GM10248 (cell line): ENCODE measurements at regions of chr14 and their contacts with region 1.

Region 1: GRCh38 chr14:102694530-102695166 is 82.6 kb upstream of the TRAF3 start:
- DNase-seq: peak; percentile 62
- CTCF ChIP-seq: peak; percentile 77

Region 2: GRCh38 chr14:101781240-101782061 is 913.2 kb before region 1 on chr14:
- CTCF ChIA-PET with region 1: no interaction called
- POLR2A ChIA-PET with region 1: no interaction called
- DNase-seq: peak; percentile 45
- CTCF ChIP-seq: no peak

Region 3: GRCh38 chr14:102708494-102708893 is 13.8 kb after region 1 on chr14:
- CTCF ChIA-PET with region 1: interaction called, 37 read pairs
- POLR2A ChIA-PET with region 1: no interaction called
- DNase-seq: peak; percentile 70
- CTCF ChIP-seq: no peak

Region 4: DNA sequence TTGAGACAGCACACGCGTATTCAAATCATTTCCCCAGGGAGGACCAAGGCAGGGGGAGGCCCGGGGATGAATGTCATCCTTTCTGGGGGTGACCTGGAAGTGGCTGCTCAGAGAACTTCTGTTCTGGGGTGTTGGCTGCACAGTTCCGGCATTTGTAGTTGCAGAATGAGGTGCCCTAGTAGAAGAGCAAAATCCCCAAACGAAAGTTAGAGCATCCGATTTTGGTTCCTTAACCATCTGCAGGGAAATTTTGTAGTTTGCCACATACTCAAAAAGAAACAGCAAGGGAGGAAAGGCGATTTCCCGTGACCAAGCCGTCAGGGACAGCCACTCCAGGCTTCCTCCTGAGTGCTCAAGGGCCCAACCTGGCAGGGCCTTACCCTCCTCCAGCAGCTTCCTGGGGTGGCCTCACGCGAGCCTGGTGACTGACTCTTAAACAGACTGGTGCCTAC is 69.6 kb after region 1 on chr14:
- CTCF ChIA-PET with region 1: interaction called, 16 read pairs
- POLR2A ChIA-PET with region 1: no interaction called
- DNase-seq: peak; percentile 83
- CTCF ChIP-seq: no peak

Region 5: GRCh38 chr14:102819176-102819628 is 124.6 kb after region 1 on chr14:
- CTCF ChIA-PET with region 1: interaction called, 32 read pairs
- POLR2A ChIA-PET with region 1: interaction called, 4 read pairs
- DNase-seq: peak; percentile 76
- CTCF ChIP-seq: no peak

Region 6: DNA sequence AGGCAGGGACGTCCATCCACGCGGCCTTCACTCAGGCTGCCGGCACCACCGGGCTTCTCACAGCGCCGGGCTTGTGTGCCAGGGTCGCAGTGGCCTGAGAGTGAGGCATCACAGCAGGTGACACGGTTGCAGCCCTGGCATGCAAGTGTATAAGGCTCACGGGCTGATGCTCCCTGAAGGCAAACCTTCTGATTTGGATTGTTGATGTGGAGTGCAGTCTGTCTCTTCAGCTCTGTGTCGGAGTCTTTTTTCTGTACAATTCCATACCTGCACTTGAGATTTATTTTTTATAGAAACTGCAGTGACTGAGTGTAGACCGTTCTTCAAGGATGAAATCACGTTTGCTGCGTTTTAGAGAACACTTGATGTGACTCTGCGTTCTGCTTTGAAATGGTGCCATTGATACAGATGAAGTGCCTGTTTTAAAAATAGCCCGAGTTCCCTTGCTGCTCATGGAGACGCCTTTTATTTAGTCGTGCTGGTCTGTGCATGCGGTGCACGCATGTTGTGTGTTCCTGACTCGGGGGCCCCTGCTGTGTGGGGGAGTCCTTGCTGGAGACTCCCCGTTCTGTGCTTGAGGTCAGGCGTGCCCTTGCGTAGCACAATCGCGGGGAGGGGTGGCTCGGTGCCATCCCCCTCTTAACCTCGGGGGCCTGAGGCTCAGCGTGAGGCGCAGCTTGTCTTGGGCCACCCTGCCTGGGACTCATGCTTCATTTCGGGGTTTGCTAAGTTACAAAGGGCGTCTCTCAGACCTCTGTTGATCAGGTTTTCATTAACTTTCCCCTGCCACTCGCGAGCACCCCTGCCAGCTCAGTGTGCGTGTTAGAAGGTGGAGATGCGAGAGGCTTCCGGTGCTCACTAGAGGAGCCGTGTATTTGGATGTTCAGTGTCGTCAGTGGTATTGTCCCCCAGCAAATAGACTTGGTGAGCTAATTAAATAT is 206.3 kb after region 1 on chr14:
- CTCF ChIA-PET with region 1: interaction called, 24 read pairs
- POLR2A ChIA-PET with region 1: no interaction called
- DNase-seq: peak; percentile 74
- CTCF ChIP-seq: no peak